ENCODE measurements at regions of chr5 and their contacts with region 1.

Region 1: GRCh38 chr5:67268231-67269021 is 71.8 kb upstream of the CD180 start:
- DNase-seq: peak; percentile 12 to 90
- H3K4me3 ChIP-seq: peak overlapping the region; percentile 31 to 43
- H3K27ac ChIP-seq: peak overlapping the region; percentile 92 to 93
- H3K4me1 ChIP-seq: peaks cover 16 to 24% of the 10 kb centered on the region in 2 donors
- H3K27me3 ChIP-seq: no peaks in the 10 kb centered on the region
- CTCF ChIP-seq: no peak

Region 2: GRCh38 chr5:67404256-67405100 is 136.1 kb after region 1 on chr5:
- intact Hi-C with region 1: no loop called
- DNase-seq: no peak
- H3K4me3 ChIP-seq: no peak overlapping the region
- H3K27ac ChIP-seq: no peak overlapping the region
- H3K4me1 ChIP-seq: no peaks in the 10 kb centered on the region
- H3K27me3 ChIP-seq: no peaks in the 10 kb centered on the region
- CTCF ChIP-seq: no peak

Region 3: DNA sequence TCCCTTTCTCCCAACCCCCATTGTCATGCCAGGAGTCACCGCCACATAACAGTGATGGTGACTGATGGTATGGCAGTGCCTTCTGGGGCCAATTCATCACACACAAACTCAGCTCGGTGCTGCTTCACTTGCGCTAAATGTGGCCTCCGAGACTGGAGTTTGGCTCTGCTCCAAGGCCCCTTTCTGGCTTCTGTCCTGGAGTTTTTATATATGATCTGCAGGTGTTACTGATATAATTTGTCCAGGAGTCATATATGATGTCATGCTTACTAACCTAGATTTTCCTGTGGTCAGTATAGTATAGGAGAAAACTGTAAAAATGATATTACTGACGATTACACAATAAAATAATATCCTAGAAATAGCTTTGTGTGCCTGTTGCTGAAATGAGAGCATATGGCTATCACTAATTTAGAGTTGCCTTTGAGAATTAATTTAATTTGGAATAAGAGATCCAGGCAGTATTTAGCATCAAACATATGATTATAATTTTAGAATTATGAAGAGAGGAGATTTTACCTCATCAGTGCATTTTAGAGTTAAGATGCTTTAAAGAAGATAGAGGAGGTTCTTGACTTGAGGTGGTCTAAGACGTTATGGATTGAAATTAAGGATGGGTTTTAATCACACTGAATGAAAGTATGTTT is 262.3 kb after region 1 on chr5:
- intact Hi-C with region 1: no loop called
- DNase-seq: no peak
- H3K4me3 ChIP-seq: no peak overlapping the region
- H3K27ac ChIP-seq: no peak overlapping the region
- H3K4me1 ChIP-seq: no peaks in the 10 kb centered on the region
- H3K27me3 ChIP-seq: no peaks in the 10 kb centered on the region
- CTCF ChIP-seq: no peak

Region 4: GRCh38 chr5:68456756-68457217 is 1188.4 kb after region 1 on chr5:
- intact Hi-C with region 1: loop called (anchors 10 kb)
- DNase-seq: peak in 1 of 2 donors; percentile 66
- H3K4me3 ChIP-seq: no peak overlapping the region
- H3K27ac ChIP-seq: no peak overlapping the region
- H3K4me1 ChIP-seq: no peaks in the 10 kb centered on the region
- H3K27me3 ChIP-seq: no peaks in the 10 kb centered on the region
- CTCF ChIP-seq: no peak